Aorta (tissue), 5 donors: ENCODE measurements at regions of chr2 and their contacts with region 1.

Region 1: GRCh38 chr2:108583903-108584520 is 49.7 kb downstream of the LIMS1 start:
- DNase-seq: no peak
- ATAC-seq: peak; percentile 88
- H3K4me3 ChIP-seq: no peak overlapping the region
- H3K27ac ChIP-seq: peak overlapping the region in 1 of 2 donors; percentile 17
- H3K4me1 ChIP-seq: peaks cover 0 to 4% of the 10 kb centered on the region in 2 donors
- H3K27me3 ChIP-seq: no peaks in the 10 kb centered on the region

Region 2: DNA sequence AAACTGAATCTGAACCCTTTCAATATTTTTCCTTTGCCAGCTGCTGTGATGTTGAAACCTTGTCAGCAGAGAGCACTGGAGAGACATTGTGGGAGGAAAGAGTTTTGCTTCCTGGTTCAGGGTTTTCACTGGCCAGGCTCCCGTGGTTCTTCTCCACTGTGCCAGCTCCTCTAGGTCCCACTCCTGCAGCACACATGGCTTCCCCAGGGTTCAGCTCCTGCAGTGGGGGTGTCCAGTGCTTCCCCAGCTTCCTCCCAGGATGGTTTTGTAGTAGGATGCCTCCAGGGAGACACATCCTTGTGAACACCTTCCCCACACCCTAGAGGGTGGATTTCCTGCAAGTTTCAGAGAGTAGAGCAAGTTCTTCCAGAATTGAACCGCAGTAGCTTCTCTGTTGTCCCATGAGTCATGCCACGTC is 368.2 kb before region 1 on chr2:
- intact Hi-C with region 1: loop called in 1 of 2 experiments (anchors 5 kb)
- DNase-seq: no peak
- ATAC-seq: peak; percentile 71
- H3K4me3 ChIP-seq: no peak overlapping the region
- H3K27ac ChIP-seq: no peak overlapping the region
- H3K4me1 ChIP-seq: peaks cover 0 to 3% of the 10 kb centered on the region in 2 donors
- H3K27me3 ChIP-seq: no peaks in the 10 kb centered on the region

Region 3: GRCh38 chr2:108351889-108352288 is 232.1 kb before region 1 on chr2:
- intact Hi-C with region 1: loop called in 1 of 2 experiments (anchors 5 kb)
- DNase-seq: no peak
- ATAC-seq: no peak
- H3K4me3 ChIP-seq: no peak overlapping the region
- H3K27ac ChIP-seq: no peak overlapping the region
- H3K4me1 ChIP-seq: no peaks in the 10 kb centered on the region
- H3K27me3 ChIP-seq: no peaks in the 10 kb centered on the region

Region 4: GRCh38 chr2:108377815-108378630 is 206.0 kb before region 1 on chr2 and contains the start of gene SULT1C4:
- intact Hi-C with region 1: loop called in 1 of 2 experiments (anchors 10 kb)
- DNase-seq: peak; percentile 57 to 78
- ATAC-seq: peak; percentile 83
- H3K4me3 ChIP-seq: no peak within 1 kb of the TSS
- H3K27ac ChIP-seq: no peak within 1 kb of the TSS
- H3K4me1 ChIP-seq: peaks cover 0 to 3% of the 10 kb centered on the region in 2 donors
- H3K27me3 ChIP-seq: no peaks in the 10 kb centered on the region
- total RNA-seq, gene SULT1C4: 4.2 to 10.3 TPM

Region 5: DNA sequence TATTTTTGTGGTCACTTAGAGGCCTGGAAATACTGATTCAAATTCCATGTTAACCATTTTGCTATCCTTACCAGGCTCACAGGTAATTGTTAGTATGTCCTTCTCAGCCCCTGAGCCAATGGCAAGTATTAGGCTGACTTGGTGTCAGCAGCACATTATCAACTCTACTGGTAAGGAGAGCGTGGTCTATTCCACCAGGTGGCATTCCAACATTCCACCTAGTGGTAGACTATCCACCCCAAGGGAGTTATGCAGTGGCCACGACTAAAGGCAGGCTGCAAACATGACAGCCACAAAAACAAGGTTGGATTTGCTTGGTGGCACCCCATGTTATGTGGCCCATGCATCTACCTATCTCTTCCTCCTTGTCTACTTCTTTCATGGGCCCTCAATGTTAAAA is 166.8 kb before region 1 on chr2:
- intact Hi-C with region 1: no loop called
- DNase-seq: no peak
- ATAC-seq: no peak
- H3K4me3 ChIP-seq: no peak overlapping the region
- H3K27ac ChIP-seq: no peak overlapping the region
- H3K4me1 ChIP-seq: no peaks in the 10 kb centered on the region
- H3K27me3 ChIP-seq: no peaks in the 10 kb centered on the region

Region 6: DNA sequence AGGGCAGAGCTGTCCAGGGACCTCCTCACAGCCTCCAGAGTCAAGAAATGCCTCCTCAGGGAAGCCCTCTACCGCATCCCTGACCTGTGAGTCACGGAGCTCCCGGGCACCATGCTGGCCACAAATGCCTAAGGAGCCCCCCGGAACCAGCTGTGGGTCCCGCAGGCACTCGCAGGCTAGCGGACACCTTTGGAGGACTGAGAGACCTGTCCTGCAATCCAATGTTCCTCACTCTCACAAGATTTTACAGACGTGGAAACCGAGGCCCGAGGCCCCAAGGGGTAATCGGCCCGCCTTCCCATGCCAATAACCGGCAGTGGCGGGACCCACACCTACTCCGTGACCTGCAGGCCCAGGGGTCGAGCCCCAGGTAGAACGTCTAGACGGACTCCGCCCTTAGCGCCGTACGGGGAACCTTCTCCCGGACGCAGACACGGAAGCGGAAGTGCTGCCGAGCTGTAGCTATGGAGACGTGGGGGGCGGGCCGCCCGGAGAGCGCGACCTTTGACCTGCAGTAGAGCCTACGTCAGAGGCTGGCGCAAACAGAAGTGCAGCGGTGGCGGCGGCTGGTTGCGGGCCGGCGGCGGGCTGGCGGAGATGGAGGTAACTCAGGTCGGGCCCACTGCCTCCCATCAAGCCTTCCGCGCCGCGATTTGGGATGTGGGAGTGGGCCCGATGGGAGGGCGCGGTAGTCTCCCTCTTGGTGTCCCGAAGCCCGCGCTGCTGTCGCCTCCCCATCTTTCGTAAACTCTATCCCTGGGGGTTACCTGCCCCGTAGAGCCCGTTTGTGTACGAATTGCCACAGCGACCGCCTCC is 135.1 kb before region 1 on chr2 and contains the start of gene GCC2:
- intact Hi-C with region 1: loop called (anchors 5 to 10 kb)
- DNase-seq: peak; percentile 97 to 98
- ATAC-seq: peak; percentile 99
- H3K4me3 ChIP-seq: peak within 1 kb of the TSS; percentile 65 to 93
- H3K27ac ChIP-seq: peak within 1 kb of the TSS in 1 of 2 donors; percentile 49
- H3K4me1 ChIP-seq: no peaks in the 10 kb centered on the region
- H3K27me3 ChIP-seq: no peaks in the 10 kb centered on the region
- total RNA-seq, gene GCC2: 52.1 to 64.6 TPM

Region 7: GRCh38 chr2:108485253-108485652 is 98.8 kb before region 1 on chr2:
- intact Hi-C with region 1: loop called in 1 of 2 experiments (anchors 10 kb)
- DNase-seq: no peak
- ATAC-seq: no peak
- H3K4me3 ChIP-seq: no peak overlapping the region
- H3K27ac ChIP-seq: no peak overlapping the region
- H3K4me1 ChIP-seq: no peaks in the 10 kb centered on the region
- H3K27me3 ChIP-seq: no peaks in the 10 kb centered on the region

Region 8: GRCh38 chr2:108533832-108534583 is 50.0 kb before region 1 on chr2 and contains the start of gene LIMS1:
- intact Hi-C with region 1: loop called (anchors 5 kb)
- DNase-seq: peak; percentile 95 to 98
- ATAC-seq: peak; percentile 98
- H3K4me3 ChIP-seq: peak within 1 kb of the TSS; percentile 70 to 99
- H3K27ac ChIP-seq: peak within 1 kb of the TSS; percentile 54 to 94
- H3K4me1 ChIP-seq: peaks cover 0 to 4% of the 10 kb centered on the region in 2 donors
- H3K27me3 ChIP-seq: no peaks in the 10 kb centered on the region
- total RNA-seq, gene LIMS1: 76.7 to 100 TPM